KBM-7 (cell line): ENCODE measurements at regions of chr13 and their contacts with region 1.

Region 1: GRCh38 chr13:31431722-31432137 is 232.0 kb downstream of the B3GLCT start:
- DNase-seq: peak; percentile 37

Region 2: DNA sequence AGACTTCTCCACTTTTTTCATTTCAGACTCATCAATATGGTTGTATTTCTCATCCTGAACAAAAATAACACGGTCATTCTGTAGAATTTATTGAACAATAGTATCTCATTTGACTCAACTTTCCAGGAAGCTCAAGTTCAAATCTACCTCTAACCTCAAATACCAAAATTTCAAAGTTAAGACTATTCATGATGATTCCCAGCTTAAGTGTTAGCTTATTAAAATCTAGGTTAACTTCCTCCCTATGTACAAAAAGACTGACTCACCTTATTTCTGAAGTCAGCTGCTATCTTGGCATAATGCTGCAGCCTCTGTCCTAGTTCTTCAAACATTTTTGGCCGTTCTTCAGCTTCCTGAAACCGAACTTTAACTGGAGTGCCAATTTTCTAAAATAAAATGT is 293.2 kb before region 1 on chr13:
- in situ Hi-C with region 1: no loop called
- DNase-seq: no peak

Region 3: DNA sequence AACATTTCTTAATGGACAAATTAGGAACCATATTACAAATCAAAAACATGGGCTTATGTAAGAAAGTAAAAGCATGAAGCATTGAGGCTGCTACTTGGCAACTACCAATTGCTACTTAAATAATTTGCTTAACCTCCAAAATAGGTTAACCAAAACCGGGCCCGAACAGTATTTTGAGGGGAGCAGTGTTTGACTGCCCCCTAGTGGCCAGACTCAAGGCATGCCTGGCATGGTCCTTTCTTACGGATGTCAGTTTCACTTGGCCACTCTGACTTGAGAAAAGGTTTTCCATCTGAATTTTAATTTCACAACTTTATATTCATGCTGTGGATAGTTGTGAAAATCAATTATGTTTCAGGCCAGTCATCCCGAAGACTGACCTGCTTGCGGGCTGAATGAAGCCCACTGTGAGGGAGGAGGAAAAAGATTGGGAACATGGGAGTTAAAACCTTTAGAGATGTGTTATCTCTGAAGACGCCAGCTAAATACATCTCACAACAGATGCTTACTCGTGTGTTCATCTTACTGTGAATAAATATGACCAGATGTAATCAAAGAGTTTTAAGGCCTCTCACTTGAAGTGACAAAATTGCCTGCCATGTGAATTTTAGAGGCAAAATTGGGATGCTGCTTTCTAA is 310.5 kb after region 1 on chr13:
- in situ Hi-C with region 1: loop called (anchors 25 kb)
- DNase-seq: peak; percentile 70